ENCODE measurements at regions of chr2 and their contacts with region 1.

Region 1: DNA sequence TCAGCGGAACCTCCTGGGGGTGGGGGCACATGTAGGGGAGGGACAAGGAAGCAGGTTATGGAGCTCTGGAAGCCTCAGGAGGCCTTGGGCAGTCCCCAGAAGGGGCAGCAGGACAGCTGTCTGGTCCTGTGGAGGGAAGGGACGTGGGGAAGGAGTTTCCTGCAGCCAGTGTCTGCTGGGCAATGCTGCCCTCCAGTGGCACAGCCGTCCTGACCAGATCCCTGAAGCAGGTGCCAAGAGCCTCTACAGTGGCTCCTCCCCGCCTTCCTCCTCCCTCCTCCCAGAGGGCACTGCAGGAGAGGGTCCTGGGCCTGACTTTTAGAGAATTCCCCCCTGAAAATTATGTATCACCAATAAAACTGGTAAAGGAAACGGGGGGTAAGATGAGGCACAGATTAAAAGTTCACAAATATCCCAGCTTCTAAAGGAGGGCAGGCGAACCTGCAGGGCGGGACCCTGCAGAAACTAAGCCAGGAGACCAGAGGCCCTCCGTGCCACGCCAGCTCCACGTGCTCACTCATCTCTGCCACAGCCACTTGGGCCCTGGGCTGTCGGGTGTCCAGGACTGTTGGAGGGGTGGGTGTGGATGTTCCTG is 258.5 kb downstream of the TWIST2 start:
- DNase-seq: peak; percentile 50 to 72
- H3K4me3 ChIP-seq: no peak overlapping the region
- H3K27ac ChIP-seq: no peak overlapping the region
- H3K4me1 ChIP-seq: no peaks in the 10 kb centered on the region
- H3K27me3 ChIP-seq: no peaks in the 10 kb centered on the region
- CTCF ChIP-seq: peak; percentile 82

Region 2: GRCh38 chr2:238362626-238363025 is 743.8 kb before region 1 on chr2:
- CTCF ChIA-PET with region 1: no interaction called
- POLR2A ChIA-PET with region 1: no interaction called
- intact Hi-C with region 1: loop called (anchors 1 kb)
- DNase-seq: no peak
- H3K4me3 ChIP-seq: no peak overlapping the region
- H3K27ac ChIP-seq: no peak overlapping the region
- H3K4me1 ChIP-seq: no peaks in the 10 kb centered on the region
- H3K27me3 ChIP-seq: no peaks in the 10 kb centered on the region
- CTCF ChIP-seq: no peak

Region 3: GRCh38 chr2:238370823-238371372 is 735.5 kb before region 1 on chr2:
- CTCF ChIA-PET with region 1: no interaction called
- POLR2A ChIA-PET with region 1: no interaction called
- intact Hi-C with region 1: loop called (anchors 5 kb)
- DNase-seq: peak in 1 of 2 experiments; percentile 58
- H3K4me3 ChIP-seq: no peak overlapping the region
- H3K27ac ChIP-seq: no peak overlapping the region
- H3K4me1 ChIP-seq: no peaks in the 10 kb centered on the region
- H3K27me3 ChIP-seq: no peaks in the 10 kb centered on the region
- CTCF ChIP-seq: peak; percentile 71

Region 4: DNA sequence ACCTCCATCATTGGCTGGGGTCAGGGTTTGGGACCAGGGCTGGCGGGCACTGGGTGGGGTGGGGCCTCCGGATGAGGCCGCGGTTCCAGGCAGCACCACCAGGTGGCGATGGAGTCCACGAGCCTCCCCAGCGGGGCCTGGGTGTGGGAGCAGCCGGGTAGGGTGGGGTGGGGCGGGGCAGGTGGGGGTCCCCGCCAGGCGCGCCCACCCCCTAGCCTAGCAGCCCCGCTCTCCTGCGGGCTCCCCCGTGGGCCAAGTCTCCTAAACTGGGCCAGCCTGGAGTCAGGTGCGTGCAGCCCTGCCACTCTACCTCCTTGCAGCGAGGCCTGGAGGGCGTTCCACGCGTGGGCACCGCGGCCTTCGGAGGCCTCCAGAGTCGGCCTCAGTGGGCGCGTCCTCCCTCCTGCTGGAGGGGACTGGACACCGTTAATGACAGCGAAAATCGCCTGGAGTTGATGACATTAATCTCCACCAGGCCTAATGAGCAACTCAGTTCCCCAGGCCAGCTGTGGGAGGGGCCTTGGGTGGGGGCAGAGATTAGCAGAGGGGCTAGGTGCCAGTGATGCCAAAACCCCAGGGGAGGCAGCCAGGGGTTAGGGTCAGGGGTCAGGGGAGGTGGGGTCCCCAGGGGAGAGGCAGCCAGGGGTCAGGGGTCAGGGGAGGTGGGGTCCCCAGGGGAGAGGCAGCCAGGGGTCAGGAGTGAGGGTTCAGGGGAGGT is 70.9 kb before region 1 on chr2:
- CTCF ChIA-PET with region 1: no interaction called
- POLR2A ChIA-PET with region 1: no interaction called
- intact Hi-C with region 1: loop called (anchors 2 kb)
- DNase-seq: peak in 1 of 2 experiments; percentile 71
- H3K4me3 ChIP-seq: no peak overlapping the region
- H3K27ac ChIP-seq: no peak overlapping the region
- H3K4me1 ChIP-seq: no peaks in the 10 kb centered on the region
- H3K27me3 ChIP-seq: peaks cover 68% of the 10 kb centered on the region
- CTCF ChIP-seq: peak; percentile 96

Region 5: DNA sequence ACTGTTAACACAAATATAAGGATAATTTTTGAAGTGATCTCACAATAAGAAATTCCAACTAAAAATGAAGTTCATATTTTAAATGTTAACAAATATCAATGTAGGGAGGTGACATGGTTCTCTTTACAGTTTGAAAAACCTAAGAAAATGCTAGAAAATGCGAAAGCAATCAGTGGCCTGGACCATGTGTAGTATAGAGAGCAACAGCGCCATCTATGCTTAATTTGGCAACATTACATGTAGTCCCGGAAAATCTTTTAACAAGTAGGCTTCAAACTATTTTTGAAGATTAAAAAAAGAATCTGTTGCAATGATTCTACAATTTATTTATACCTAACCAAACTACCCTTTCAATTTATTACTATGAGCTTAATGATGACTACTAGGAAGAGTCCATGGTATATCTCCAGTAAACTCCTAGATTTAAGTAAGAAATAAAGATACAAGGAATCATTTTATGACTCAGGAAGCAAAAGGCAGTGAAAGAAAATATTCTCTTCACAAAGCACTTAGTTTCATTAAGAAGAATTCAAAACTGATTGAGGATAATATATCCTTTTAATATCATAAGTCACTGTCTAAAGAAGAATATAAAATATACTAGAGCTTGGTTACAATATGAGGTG is 885.4 kb after region 1 on chr2:
- CTCF ChIA-PET with region 1: no interaction called
- POLR2A ChIA-PET with region 1: no interaction called
- intact Hi-C with region 1: loop called (anchors 5 kb)
- DNase-seq: peak in 1 of 2 experiments; percentile 50
- H3K4me3 ChIP-seq: no peak overlapping the region
- H3K27ac ChIP-seq: no peak overlapping the region
- H3K4me1 ChIP-seq: no peaks in the 10 kb centered on the region
- H3K27me3 ChIP-seq: no peaks in the 10 kb centered on the region
- CTCF ChIP-seq: peak; percentile 98

Measured in PC-9 (cell line).